Activated CD4-positive, alpha-beta T cell treated with anti-CD3 and anti-CD28 coated beads, Interleukin-2, amount 10 ng/mL, durations not matched to agents 24 days and 14 days (primary cell): ENCODE measurements at regions of chr11 and their contacts with region 1.

Region 1: GRCh38 chr11:114340311-114341131 is 44.3 kb downstream of the NNMT start:
- DNase-seq: peak; percentile 77
- H3K4me3 Mint-ChIP-seq: peak overlapping the region; percentile 69
- H3K27ac Mint-ChIP-seq: no peak overlapping the region
- H3K4me1 Mint-ChIP-seq: peaks cover 10% of the 10 kb centered on the region
- H3K27me3 Mint-ChIP-seq: peaks cover 24% of the 10 kb centered on the region

Region 2: DNA sequence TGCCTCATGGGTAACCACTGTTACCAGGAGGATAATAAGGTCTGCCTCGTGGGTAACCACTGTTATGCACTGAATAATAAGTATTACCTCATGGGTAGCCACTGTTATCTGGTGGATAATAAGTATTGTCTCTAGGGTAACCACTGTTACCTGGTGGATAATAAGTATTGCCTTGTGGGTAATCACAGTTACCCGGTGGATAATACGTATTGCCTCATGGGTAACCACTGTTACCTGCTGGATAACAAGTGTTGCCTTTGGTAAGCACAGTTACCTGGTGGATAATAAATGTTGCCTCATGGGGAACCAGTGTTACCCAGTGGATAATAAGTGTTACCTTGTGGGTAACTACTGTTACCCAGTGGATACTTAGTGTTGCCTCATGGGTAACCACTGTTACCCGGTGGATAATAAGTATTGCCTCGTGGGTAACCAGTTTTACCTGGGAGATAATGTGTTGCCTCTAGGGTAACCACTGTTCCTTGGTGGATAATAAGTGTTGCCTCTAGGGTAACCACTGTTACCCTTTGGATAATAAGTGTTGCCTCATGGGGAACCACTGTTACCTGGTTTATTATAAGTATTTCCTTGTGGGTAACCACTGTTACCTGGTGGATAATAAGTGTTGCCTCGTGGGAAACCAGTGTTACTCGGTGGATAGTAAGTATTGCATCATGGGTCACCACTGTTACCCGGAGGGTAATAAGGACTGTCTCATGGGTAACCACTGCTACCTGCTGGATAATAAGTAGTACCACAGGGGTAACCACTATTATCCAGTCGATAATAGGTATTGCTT is 265.7 kb after region 1 on chr11:
- intact Hi-C with region 1: loop called (anchors 10 kb)
- DNase-seq: no peak
- H3K4me3 Mint-ChIP-seq: no peak overlapping the region
- H3K27ac Mint-ChIP-seq: no peak overlapping the region
- H3K4me1 Mint-ChIP-seq: no peaks in the 10 kb centered on the region
- H3K27me3 Mint-ChIP-seq: no peaks in the 10 kb centered on the region